H1 (cell line): ENCODE measurements at regions of chr17 and their contacts with region 1.

Region 1: DNA sequence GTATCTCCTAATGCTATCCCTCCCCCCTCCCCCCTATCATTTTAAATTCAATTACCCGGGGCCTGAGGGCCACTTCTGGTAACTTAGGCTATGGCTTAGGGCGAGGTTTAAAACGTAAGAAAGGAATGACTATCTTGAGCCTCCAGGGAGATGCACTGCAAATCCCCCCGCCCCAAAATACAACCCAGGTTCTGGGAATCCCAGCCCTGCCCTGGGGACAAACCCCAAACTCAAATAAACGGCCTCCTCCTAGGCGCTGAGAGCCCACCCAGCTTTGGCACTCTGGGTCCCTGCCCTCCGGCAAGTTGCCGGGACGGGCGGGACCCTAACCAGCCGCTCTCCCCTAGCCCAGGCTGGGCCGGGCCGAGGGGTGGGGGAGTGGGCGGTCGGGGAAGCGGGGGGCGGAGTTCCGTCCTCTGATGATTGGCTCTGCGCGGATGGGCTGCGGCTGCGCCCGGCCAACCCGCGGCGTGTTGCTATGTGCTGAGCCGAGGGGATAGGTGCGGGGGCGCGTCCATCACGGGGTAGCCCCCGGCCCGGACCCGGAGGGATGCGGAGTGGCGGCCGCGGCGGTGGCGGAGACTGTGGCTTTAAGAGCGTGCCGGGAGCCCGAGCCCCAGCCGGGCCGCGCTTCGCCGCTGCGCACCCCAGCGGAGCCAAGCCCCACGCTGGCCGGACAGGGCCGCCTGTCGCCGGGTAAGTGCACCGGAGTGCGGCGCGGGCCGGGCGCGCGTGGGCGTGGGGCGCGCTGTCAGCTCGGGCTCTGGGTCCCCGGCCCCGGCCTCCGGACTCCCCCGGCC is at the start of gene YPEL2:
- DNase-seq: peak; percentile 84 to 97
- H3K4me3 ChIP-seq: peak within 1 kb of the TSS; percentile 63 to 79 (median 66)
- H3K27ac ChIP-seq: no peak within 1 kb of the TSS
- H3K4me1 ChIP-seq: peaks cover 10 to 19% (median 14%) of the 10 kb centered on the region in 4 experiments; a peak in 6 of 7 replicates
- H3K27me3 ChIP-seq: peaks cover 1 to 22% (median 14%) of the 10 kb centered on the region in 4 experiments; a peak in 6 of 7 replicates
- CTCF ChIP-seq: no peak
- EP300 ChIP-seq: no peak
- POLR2A ChIP-seq: no peak
- RAD21 ChIP-seq: no peak
- total RNA-seq, gene YPEL2: 3.2 and 3.5 TPM in 2 replicates

Region 2: GRCh38 chr17:59287452-59287851 is 43.9 kb before region 1 on chr17:
- CTCF ChIA-PET with region 1: no interaction called
- POLR2A ChIA-PET with region 1: no interaction called
- DNase-seq: no peak
- H3K4me3 ChIP-seq: no peak overlapping the region
- H3K27ac ChIP-seq: no peak overlapping the region
- H3K4me1 ChIP-seq: peaks cover 0 to 6% (median 2%) of the 10 kb centered on the region in 4 experiments; a peak in 4 of 7 replicates
- H3K27me3 ChIP-seq: no peaks in the 10 kb centered on the region
- CTCF ChIP-seq: no peak
- EP300 ChIP-seq: no peak
- POLR2A ChIP-seq: no peak
- RAD21 ChIP-seq: no peak

Region 3: GRCh38 chr17:59311130-59311920 is 20.0 kb before region 1 on chr17:
- CTCF ChIA-PET with region 1: interaction called, 46 read pairs
- POLR2A ChIA-PET with region 1: no interaction called
- DNase-seq: no peak
- H3K4me3 ChIP-seq: no peak overlapping the region
- H3K27ac ChIP-seq: no peak overlapping the region
- H3K4me1 ChIP-seq: no peaks in the 10 kb centered on the region
- H3K27me3 ChIP-seq: no peaks in the 10 kb centered on the region
- CTCF ChIP-seq: peak in 2 of 3 experiments; percentile 77 to 86; a peak in 3 of 4 replicates
- EP300 ChIP-seq: no peak
- POLR2A ChIP-seq: no peak
- RAD21 ChIP-seq: peak; percentile 93 to 95

Region 4: GRCh38 chr17:59400858-59401257 is 69.5 kb after region 1 on chr17:
- CTCF ChIA-PET with region 1: interaction called, 10 read pairs
- POLR2A ChIA-PET with region 1: interaction called, 3 read pairs
- DNase-seq: no peak
- H3K4me3 ChIP-seq: no peak overlapping the region
- H3K27ac ChIP-seq: no peak overlapping the region
- H3K4me1 ChIP-seq: no peaks in the 10 kb centered on the region
- H3K27me3 ChIP-seq: no peaks in the 10 kb centered on the region
- CTCF ChIP-seq: no peak
- EP300 ChIP-seq: no peak
- POLR2A ChIP-seq: no peak
- RAD21 ChIP-seq: no peak

Region 5: GRCh38 chr17:59423137-59423703 is 91.9 kb after region 1 on chr17:
- CTCF ChIA-PET with region 1: interaction called, 37 read pairs
- POLR2A ChIA-PET with region 1: no interaction called
- DNase-seq: no peak
- H3K4me3 ChIP-seq: no peak overlapping the region
- H3K27ac ChIP-seq: no peak overlapping the region
- H3K4me1 ChIP-seq: peaks cover 2 to 12% (median 6%) of the 10 kb centered on the region in 4 experiments; a peak in 5 of 7 replicates
- H3K27me3 ChIP-seq: no peaks in the 10 kb centered on the region
- CTCF ChIP-seq: no peak
- EP300 ChIP-seq: no peak
- POLR2A ChIP-seq: no peak
- RAD21 ChIP-seq: no peak

Region 6: DNA sequence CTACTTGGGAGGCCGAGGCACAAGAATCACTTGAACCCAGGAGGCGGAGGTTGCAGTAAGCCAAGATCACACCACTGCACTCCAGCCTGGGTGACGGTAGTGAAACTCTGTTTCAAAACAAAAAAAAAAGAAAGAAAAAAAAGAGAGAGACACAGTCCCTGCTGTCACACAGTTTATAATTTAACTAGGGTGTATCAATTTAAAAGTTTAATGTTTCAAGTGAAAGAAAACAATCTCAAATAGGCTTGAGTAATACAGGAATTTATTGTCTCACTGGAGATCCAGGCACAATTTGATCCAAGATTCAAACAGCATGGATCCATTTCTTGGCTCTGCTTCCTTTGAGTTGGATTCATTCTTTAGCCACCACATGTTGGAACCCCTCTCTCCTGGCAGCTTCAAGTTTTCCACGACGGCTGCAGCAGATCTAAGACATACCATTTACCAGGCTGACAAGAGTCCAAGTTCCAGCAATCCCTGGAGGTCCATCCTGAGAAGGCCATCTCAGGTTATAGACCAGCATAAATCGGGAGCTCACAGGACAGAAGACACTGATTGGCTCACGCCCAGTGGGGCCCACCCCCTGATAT is 97.7 kb after region 1 on chr17:
- CTCF ChIA-PET with region 1: interaction called, 299 read pairs
- POLR2A ChIA-PET with region 1: no interaction called
- DNase-seq: no peak
- H3K4me3 ChIP-seq: no peak overlapping the region
- H3K27ac ChIP-seq: no peak overlapping the region
- H3K4me1 ChIP-seq: peaks cover 0 to 9% (median 6%) of the 10 kb centered on the region in 4 experiments; a peak in 3 of 7 replicates
- H3K27me3 ChIP-seq: no peaks in the 10 kb centered on the region
- CTCF ChIP-seq: no peak
- EP300 ChIP-seq: no peak
- POLR2A ChIP-seq: no peak
- RAD21 ChIP-seq: no peak